Esophagus squamous epithelium (tissue), 5 donors: ENCODE measurements at regions of chr21 and their contacts with region 1.

Region 1: DNA sequence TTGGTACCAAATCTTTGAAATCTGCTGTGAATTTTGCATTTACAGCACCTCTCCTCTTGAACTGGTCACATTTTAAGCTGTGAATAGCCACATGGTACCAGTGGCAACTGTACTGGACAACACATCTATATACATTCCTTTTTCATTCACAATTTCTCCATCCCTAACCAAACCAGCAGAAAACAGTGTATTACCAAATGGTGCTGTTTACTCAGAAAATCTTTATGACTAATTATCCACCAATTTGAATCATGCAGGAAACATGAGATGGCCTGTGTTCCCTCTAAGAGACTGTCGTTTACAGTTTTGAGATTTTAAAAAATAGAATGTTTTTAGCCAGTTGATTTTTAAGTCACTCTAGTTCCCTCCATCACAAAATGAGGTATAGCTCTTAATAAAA is 17.6 kb upstream of the CCT8 start:
- DNase-seq: no peak
- H3K4me3 ChIP-seq: no peak overlapping the region
- H3K27ac ChIP-seq: no peak overlapping the region
- H3K4me1 ChIP-seq: peaks cover 0 to 6% (median 0%) of the 10 kb centered on the region in 3 donors
- H3K27me3 ChIP-seq: no peaks in the 10 kb centered on the region
- CTCF ChIP-seq: no peak
- POLR2A ChIP-seq: no peak

Region 2: DNA sequence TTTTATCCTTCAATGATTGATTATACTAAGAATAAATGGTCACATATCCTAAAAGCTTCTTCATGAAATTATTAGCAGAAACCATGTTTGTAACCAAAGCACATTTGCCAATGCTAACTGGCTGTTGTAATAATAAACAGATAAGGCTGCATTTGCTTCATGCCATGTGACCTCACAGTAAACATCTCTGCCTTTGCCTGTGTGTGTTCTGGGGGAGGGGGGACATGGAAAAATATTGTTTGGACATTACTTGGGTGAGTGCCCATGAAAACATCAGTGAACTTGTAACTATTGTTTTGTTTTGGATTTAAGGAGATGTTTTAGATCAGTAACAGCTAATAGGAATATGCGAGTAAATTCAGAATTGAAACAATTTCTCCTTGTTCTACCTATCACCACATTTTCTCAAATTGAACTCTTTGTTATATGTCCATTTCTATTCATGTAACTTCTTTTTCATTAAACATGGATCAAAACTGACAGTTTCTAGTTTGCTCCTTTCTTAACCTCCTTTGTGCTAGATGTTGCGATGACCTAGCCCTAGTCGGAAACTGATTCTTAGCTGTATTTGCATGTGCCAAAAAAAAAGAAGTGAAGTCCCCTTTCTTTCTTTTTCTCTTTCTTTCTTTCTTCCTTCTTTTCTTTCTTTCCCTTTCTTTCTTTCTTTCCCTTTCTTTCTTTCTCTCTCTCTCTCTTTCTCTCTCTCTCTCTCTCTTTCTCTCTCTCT is 84.5 kb after region 1 on chr21:
- intact Hi-C with region 1: no loop called
- DNase-seq: no peak
- H3K4me3 ChIP-seq: peak overlapping the region in 1 of 4 donors; percentile 18
- H3K27ac ChIP-seq: peak overlapping the region in 2 of 4 donors; percentile 34 to 65
- H3K4me1 ChIP-seq: peaks cover 0 to 12% (median 4%) of the 10 kb centered on the region in 3 donors
- H3K27me3 ChIP-seq: no peaks in the 10 kb centered on the region
- CTCF ChIP-seq: no peak
- POLR2A ChIP-seq: no peak

Region 3: DNA sequence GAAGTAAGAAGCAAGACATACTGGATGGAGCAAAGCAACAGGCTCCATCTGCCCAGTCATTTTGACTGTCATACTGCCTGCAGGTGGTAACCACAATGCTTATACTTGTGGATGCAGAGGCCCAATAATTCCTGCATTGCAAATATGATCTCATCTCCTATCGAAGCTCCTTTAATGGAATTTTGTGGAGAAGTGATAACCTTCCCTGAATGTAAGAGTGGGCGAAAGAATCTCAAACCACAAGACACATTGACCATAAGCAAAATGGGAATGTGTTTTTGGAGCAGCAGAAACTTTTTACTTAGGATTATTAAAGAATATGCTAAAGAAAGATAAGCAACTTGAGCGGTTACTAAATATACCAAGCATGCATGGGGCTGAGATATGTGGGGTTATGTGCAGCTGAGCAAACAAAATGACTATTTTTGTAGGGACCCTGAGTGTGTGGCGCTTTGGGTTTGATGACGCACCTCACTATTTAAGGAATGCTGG is 130.3 kb after region 1 on chr21:
- intact Hi-C with region 1: no loop called
- DNase-seq: no peak
- H3K4me3 ChIP-seq: no peak overlapping the region
- H3K27ac ChIP-seq: no peak overlapping the region
- H3K4me1 ChIP-seq: peaks cover 0 to 22% (median 0%) of the 10 kb centered on the region in 3 donors
- H3K27me3 ChIP-seq: no peaks in the 10 kb centered on the region
- CTCF ChIP-seq: no peak
- POLR2A ChIP-seq: no peak

Region 4: DNA sequence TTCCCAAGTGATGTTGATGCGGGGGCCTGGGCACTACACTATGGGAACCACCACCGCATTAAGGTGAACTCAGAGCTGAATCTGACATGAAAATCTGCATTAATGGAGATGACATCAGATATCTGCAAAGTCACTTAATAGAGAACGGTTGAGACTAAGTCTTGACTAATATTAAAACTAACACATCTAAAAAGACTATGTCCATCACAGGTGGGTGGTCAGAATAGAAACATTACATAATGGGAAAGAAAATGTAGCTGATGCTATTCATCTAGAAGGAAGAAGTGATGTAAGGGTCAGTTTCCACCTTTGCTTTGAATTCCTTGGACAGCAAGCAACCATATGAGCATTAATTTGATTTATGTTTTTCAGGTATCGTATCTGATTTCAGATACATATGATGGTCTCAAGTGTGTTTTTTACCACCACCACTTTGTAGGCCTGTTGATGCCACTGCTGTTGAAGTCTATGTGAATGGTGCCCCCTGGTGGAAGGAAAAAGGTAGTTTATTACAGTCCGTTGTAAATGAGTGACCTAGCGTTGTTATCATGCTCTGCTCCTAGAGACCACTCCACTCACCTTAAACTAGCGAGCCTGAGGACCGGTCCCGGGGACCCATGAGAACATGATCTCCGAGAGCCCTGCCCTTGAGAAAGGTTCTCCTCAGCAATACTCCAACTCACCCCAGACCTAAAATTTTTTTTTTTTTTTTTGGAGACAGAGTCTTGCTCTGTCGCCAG is 281.2 kb after region 1 on chr21:
- intact Hi-C with region 1: loop called (anchors 5 kb)
- DNase-seq: peak; percentile 10
- H3K4me3 ChIP-seq: no peak overlapping the region
- H3K27ac ChIP-seq: no peak overlapping the region
- H3K4me1 ChIP-seq: peaks cover 0 to 3% (median 3%) of the 10 kb centered on the region in 3 donors
- H3K27me3 ChIP-seq: no peaks in the 10 kb centered on the region
- CTCF ChIP-seq: peak; percentile 55 to 86 (median 80)
- POLR2A ChIP-seq: no peak